Activated CD8-positive, alpha-beta T cell treated with anti-CD3 and anti-CD28 coated beads for 36 hours (primary cell): ENCODE measurements at regions of chr7 and their contacts with region 1.

Region 1: DNA sequence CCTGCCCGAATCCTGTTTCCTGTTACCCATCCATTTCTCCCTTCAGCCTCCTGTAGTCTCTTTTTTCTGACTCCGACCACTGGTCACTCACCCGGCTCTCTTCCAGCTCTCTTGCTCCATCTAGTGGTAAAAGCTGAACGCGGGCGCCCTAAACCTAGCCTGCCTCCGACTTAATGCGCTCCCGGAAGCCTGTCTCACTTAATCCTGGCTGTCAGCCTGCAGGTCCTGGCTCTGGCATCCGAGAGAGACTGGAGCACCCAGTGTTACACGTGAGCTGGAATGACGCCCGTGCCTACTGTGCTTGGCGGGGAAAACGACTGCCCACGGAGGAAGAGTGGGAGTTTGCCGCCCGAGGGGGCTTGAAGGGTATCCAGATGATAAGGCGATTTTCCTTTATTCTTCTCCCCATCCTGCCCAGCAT is 10.3 kb downstream of the SUMF2 start:
- DNase-seq: peak; percentile 69
- ATAC-seq: peak; percentile 85
- H3K4me3 Mint-ChIP-seq: no peak overlapping the region
- H3K27ac Mint-ChIP-seq: peak overlapping the region; percentile 7
- H3K4me1 Mint-ChIP-seq: peaks cover 8% of the 10 kb centered on the region
- H3K27me3 Mint-ChIP-seq: no peaks in the 10 kb centered on the region
- CTCF ChIP-seq: peak; percentile 75

Region 2: DNA sequence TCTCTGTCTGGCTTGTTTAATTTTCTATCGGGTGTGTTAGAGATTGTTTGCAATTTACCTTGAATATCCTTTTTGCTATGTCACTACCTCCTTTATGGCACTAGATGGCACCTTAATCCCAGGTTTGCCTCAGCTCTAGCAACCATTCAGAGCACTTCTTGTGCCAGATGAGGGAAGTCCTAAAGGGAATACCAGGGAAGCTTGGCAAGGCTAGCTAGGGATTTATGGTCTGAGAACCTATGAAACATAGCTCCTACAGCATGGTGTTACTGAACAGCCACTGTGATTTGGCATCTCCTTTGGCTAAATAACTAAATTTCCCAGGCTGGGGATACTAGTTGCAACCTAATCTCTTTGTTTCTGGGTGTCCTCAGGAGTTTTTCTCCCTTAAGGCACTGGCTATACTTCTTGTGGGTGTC is 433.1 kb before region 1 on chr7:
- CTCF ChIA-PET with region 1: interaction called, 13 read pairs
- POLR2A ChIA-PET with region 1: interaction called, 3 read pairs
- intact Hi-C with region 1: loop called (anchors 5 kb)
- DNase-seq: peak; percentile 42
- ATAC-seq: peak; percentile 85
- H3K4me3 Mint-ChIP-seq: no peak overlapping the region
- H3K27ac Mint-ChIP-seq: no peak overlapping the region
- H3K4me1 Mint-ChIP-seq: peaks cover 9% of the 10 kb centered on the region
- H3K27me3 Mint-ChIP-seq: no peaks in the 10 kb centered on the region
- CTCF ChIP-seq: peak; percentile 79

Region 3: GRCh38 chr7:56007167-56007652 is 67.2 kb before region 1 on chr7:
- CTCF ChIA-PET with region 1: interaction called, 44 read pairs
- POLR2A ChIA-PET with region 1: no interaction called
- intact Hi-C with region 1: loop called (anchors 2 kb)
- DNase-seq: peak; percentile 7
- ATAC-seq: no peak
- H3K4me3 Mint-ChIP-seq: no peak overlapping the region
- H3K27ac Mint-ChIP-seq: no peak overlapping the region
- H3K4me1 Mint-ChIP-seq: no peaks in the 10 kb centered on the region
- H3K27me3 Mint-ChIP-seq: no peaks in the 10 kb centered on the region
- CTCF ChIP-seq: no peak

Region 4: GRCh38 chr7:56051339-56052191 is 22.8 kb before region 1 on chr7 and contains the starts of genes CCT6A and PSPH:
- CTCF ChIA-PET with region 1: interaction called, 16 read pairs
- POLR2A ChIA-PET with region 1: interaction called, 4 read pairs
- intact Hi-C with region 1: no loop called
- DNase-seq: peak; percentile 94
- ATAC-seq: peak; percentile 92
- H3K4me3 Mint-ChIP-seq: peak within 1 kb of the TSS; percentile 94
- H3K27ac Mint-ChIP-seq: peak within 1 kb of the TSS; percentile 94
- H3K4me1 Mint-ChIP-seq: peaks cover 46% of the 10 kb centered on the region
- H3K27me3 Mint-ChIP-seq: no peaks in the 10 kb centered on the region
- CTCF ChIP-seq: no peak
- total RNA-seq, gene CCT6A: 231 to 239 TPM
- total RNA-seq, gene PSPH: 31.2 to 33.8 TPM

Region 5: GRCh38 chr7:56063882-56064625 is 10.3 kb before region 1 on chr7 and contains the start of gene SUMF2:
- CTCF ChIA-PET with region 1: interaction called, 47 read pairs
- POLR2A ChIA-PET with region 1: interaction called, 5 read pairs
- intact Hi-C with region 1: no loop called
- DNase-seq: peak; percentile 89
- ATAC-seq: peak; percentile 93
- H3K4me3 Mint-ChIP-seq: peak within 1 kb of the TSS; percentile 86
- H3K27ac Mint-ChIP-seq: peak within 1 kb of the TSS; percentile 95
- H3K4me1 Mint-ChIP-seq: peaks cover 40% of the 10 kb centered on the region
- H3K27me3 Mint-ChIP-seq: no peaks in the 10 kb centered on the region
- CTCF ChIP-seq: no peak
- total RNA-seq, gene SUMF2: 140 to 141 TPM

Region 6: DNA sequence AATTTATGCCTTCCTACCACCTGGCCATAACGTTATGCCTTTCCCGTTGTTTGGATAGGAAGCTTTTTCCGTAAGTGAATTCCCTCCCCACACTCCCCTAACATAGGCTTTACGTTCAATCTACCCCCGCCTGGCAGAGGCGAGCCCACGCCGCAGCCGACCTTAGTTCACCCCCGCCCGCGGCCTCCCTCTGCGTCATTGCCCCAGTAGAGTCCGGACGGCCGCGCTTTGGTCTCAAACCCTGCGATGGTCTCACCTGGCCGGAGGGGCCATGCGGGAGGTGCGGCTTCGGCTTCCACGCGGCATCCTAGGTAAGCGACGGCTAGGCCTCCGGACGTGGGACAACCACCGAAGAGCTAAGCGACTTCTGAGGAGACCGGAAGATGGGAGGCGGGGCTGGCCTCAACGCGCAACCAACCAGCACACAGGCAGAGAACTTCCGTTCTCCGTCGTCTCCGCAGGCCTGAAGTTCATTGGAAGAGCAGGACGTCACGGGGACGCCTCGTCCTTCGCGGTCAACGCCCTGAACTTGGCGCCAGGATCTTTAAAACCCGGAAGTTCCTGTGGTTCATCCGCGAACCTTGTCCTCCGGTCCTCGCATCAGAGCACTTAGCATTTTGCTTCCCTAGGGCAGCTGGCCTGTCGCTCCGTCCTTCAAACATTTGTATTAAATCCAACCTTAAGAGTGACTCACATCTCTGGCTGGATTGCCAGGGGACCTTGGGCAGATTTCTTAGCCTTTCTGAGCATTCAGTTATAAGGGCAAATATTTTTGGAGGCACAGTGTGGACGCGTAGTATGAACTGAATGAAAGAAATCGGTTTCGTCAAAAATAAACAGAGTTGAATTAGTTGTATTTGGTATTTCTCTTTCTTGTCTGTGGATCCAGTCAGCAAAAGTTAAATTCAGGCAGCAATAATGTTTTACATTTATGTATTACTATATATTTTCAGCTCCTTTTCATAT is 32.0 kb after region 1 on chr7 and contains the start of gene CHCHD2:
- CTCF ChIA-PET with region 1: interaction called, 11 read pairs
- POLR2A ChIA-PET with region 1: interaction called, 3 read pairs
- intact Hi-C with region 1: no loop called
- DNase-seq: peak; percentile 97
- ATAC-seq: peak; percentile 98
- H3K4me3 Mint-ChIP-seq: peak within 1 kb of the TSS; percentile 100
- H3K27ac Mint-ChIP-seq: peak within 1 kb of the TSS; percentile 99
- H3K4me1 Mint-ChIP-seq: peaks cover 29% of the 10 kb centered on the region
- H3K27me3 Mint-ChIP-seq: no peaks in the 10 kb centered on the region
- CTCF ChIP-seq: no peak
- total RNA-seq, gene CHCHD2: 726 to 748 TPM